CD4-positive, alpha-beta memory T cell (primary cell): ENCODE measurements at regions of chr5 and their contacts with region 1.

Region 1: GRCh38 chr5:1516751-1517601 is 6.8 kb downstream of the LPCAT1 start:
- DNase-seq: no peak
- H3K4me3 ChIP-seq: no peak overlapping the region
- H3K4me3 Mint-ChIP-seq: peak overlapping the region in 1 of 8 donors; percentile 20
- H3K27ac ChIP-seq: no peak overlapping the region
- H3K27ac Mint-ChIP-seq: peak overlapping the region in 3 of 7 donors; percentile 56 to 60 (median 57)
- H3K4me1 ChIP-seq: peaks cover 47% of the 10 kb centered on the region
- H3K4me1 Mint-ChIP-seq: peaks cover 10 to 47% (median 28%) of the 10 kb centered on the region in 4 donors
- H3K27me3 ChIP-seq: no peaks in the 10 kb centered on the region
- H3K27me3 Mint-ChIP-seq: no peaks in the 10 kb centered on the region

Region 2: GRCh38 chr5:1255081-1255561 is 261.9 kb before region 1 on chr5:
- CTCF ChIA-PET with region 1: no interaction called
- POLR2A ChIA-PET with region 1: no interaction called
- intact Hi-C with region 1: no loop called
- DNase-seq: peak; percentile 59 to 66 (median 64)
- H3K4me3 ChIP-seq: peak overlapping the region; percentile 12 to 34
- H3K4me3 Mint-ChIP-seq: peak overlapping the region; percentile 69 to 84 (median 82)
- H3K27ac ChIP-seq: no peak overlapping the region
- H3K27ac Mint-ChIP-seq: peak overlapping the region; percentile 36 to 81 (median 58)
- H3K4me1 ChIP-seq: peaks cover 18% of the 10 kb centered on the region
- H3K4me1 Mint-ChIP-seq: peaks cover 15 to 22% (median 17%) of the 10 kb centered on the region in 4 donors
- H3K27me3 ChIP-seq: no peaks in the 10 kb centered on the region
- H3K27me3 Mint-ChIP-seq: no peaks in the 10 kb centered on the region

Region 3: DNA sequence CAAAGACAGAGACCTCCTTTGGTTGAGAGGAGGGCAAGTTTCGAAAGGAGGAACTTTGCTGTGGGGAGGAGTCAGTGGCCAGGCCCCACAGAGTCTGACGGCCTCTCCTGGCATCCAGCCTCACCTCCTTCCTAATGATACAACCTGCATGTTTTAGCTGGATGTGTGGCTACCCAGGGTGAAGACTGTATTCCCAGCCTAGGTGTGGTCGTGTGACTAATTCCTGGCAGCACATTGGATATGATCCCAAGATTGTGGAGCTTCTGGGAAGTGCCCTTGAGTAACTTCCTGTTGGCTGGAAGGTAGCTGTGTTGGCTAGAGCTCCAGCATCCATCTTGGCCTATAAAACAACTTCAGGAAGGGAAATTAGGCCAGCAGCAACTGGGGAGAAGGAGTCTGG is 25.8 kb after region 1 on chr5:
- CTCF ChIA-PET with region 1: no interaction called
- POLR2A ChIA-PET with region 1: no interaction called
- intact Hi-C with region 1: no loop called
- DNase-seq: no peak
- H3K4me3 ChIP-seq: no peak overlapping the region
- H3K4me3 Mint-ChIP-seq: no peak overlapping the region
- H3K27ac ChIP-seq: no peak overlapping the region
- H3K27ac Mint-ChIP-seq: peak overlapping the region in 1 of 7 donors; percentile 12
- H3K4me1 ChIP-seq: no peaks in the 10 kb centered on the region
- H3K4me1 Mint-ChIP-seq: peaks cover 4 to 8% (median 6%) of the 10 kb centered on the region in 4 donors
- H3K27me3 ChIP-seq: no peaks in the 10 kb centered on the region
- H3K27me3 Mint-ChIP-seq: no peaks in the 10 kb centered on the region

Region 4: GRCh38 chr5:1792842-1793266 is 275.9 kb after region 1 on chr5:
- CTCF ChIA-PET with region 1: no interaction called
- POLR2A ChIA-PET with region 1: no interaction called
- intact Hi-C with region 1: loop called (anchors 5 kb)
- DNase-seq: peak; percentile 82 to 90 (median 85)
- H3K4me3 ChIP-seq: peak overlapping the region; percentile 34 to 37
- H3K4me3 Mint-ChIP-seq: peak overlapping the region; percentile 70 to 91 (median 84)
- H3K27ac ChIP-seq: peak overlapping the region; percentile 60
- H3K27ac Mint-ChIP-seq: peak overlapping the region; percentile 90 to 99 (median 94)
- H3K4me1 ChIP-seq: peaks cover 56% of the 10 kb centered on the region
- H3K4me1 Mint-ChIP-seq: peaks cover 34 to 86% (median 47%) of the 10 kb centered on the region in 4 donors
- H3K27me3 ChIP-seq: no peaks in the 10 kb centered on the region
- H3K27me3 Mint-ChIP-seq: peaks cover 0 to 2% of the 10 kb centered on the region in 2 donors